ENCODE measurements at regions of chr7 and their contacts with region 1.

Region 1: GRCh38 chr7:140326116-140326928 is 72.0 kb downstream of the SLC37A3 start:
- DNase-seq: no peak
- H3K4me3 ChIP-seq: no peak overlapping the region
- H3K27me3 ChIP-seq: no peaks in the 10 kb centered on the region
- CTCF ChIP-seq: peak; percentile 82

Region 2: DNA sequence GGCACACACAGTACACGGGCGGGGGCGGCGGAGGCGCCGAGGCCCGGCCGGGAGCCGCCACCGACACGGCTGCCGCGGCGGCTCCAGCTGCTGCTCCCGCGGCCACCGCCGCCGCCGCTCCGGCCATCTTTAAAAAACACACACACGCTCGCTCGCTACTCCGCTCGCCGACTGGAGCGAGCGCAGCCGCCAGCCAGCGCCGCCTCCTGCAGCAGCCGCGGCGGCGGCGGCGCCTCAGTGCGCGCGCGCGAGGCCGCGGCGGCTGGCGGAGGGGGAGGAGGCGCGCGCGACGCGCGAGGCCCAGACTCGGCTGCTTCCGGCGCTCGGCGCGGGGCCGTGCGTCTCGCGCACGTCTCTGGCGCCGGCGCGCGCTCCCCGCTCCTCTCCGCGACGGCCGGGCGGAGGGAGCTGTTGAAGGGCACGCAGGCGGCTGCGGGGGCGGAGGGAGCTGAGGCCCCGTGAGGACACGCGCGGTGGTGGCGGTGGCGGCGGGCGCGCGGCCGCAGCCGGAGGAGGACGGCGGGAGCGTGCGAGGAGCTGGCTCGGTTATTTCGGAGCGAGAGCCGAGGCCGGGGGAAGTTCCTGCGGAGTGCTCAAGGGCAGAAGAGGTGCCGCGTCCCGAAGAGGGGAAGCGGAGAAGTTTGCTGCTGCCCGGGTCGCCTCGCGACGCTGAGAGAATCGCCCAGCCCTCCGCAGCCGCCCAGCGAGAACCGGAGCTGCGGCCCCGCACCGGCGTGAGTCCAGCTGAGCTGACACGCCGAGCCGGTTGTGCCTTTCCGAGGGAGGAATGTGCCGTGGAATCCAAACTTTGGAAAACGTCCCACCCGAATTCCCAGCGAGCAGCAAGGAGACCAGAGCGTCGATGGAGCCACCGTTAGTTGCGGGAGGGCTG is 149.3 kb before region 1 on chr7 and contains the start of gene KDM7A:
- CTCF ChIA-PET with region 1: interaction called, 10 read pairs
- POLR2A ChIA-PET with region 1: no interaction called
- DNase-seq: peak; percentile 57
- H3K4me3 ChIP-seq: peak within 1 kb of the TSS; percentile 82
- H3K27me3 ChIP-seq: peaks cover 2% of the 10 kb centered on the region; the same call in 1 of the 2 replicates
- CTCF ChIP-seq: no peak
- polyA plus RNA-seq, gene KDM7A: 2.9 and 4.3 TPM in 2 replicates

Region 3: GRCh38 chr7:140316165-140316661 is 10.1 kb before region 1 on chr7:
- CTCF ChIA-PET with region 1: interaction called, 12 read pairs
- POLR2A ChIA-PET with region 1: no interaction called
- DNase-seq: peak; percentile 18
- H3K4me3 ChIP-seq: no peak overlapping the region
- H3K27me3 ChIP-seq: no peaks in the 10 kb centered on the region
- CTCF ChIP-seq: no peak

Region 4: GRCh38 chr7:140390466-140391190 is 64.3 kb after region 1 on chr7:
- CTCF ChIA-PET with region 1: no interaction called
- POLR2A ChIA-PET with region 1: no interaction called
- DNase-seq: no peak
- H3K4me3 ChIP-seq: no peak overlapping the region
- H3K27me3 ChIP-seq: peaks cover 4% of the 10 kb centered on the region; the same call in 1 of the 2 replicates
- CTCF ChIP-seq: no peak

Region 5: DNA sequence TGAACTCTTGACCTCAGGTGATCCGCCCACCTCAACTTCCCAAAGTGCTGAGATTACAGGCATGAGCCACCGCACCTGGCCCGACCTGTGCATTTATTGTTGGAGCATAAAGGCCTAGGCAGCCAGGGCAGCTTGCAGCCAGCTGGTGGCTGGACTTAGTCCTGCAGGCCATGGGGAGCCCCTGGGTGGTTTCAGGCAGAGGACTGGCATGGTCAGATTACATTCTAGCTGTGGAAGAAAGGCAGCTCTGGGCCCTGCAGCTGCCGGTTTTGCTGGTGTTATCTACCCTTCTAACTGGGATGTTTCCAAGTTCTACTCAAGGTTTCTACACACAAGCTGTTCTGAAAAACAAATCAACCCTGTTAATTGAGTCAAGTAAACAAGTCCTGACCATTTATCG is 175.6 kb after region 1 on chr7:
- CTCF ChIA-PET with region 1: no interaction called
- POLR2A ChIA-PET with region 1: no interaction called
- DNase-seq: no peak
- H3K4me3 ChIP-seq: no peak overlapping the region
- H3K27me3 ChIP-seq: no peaks in the 10 kb centered on the region
- CTCF ChIP-seq: no peak

Region 6: DNA sequence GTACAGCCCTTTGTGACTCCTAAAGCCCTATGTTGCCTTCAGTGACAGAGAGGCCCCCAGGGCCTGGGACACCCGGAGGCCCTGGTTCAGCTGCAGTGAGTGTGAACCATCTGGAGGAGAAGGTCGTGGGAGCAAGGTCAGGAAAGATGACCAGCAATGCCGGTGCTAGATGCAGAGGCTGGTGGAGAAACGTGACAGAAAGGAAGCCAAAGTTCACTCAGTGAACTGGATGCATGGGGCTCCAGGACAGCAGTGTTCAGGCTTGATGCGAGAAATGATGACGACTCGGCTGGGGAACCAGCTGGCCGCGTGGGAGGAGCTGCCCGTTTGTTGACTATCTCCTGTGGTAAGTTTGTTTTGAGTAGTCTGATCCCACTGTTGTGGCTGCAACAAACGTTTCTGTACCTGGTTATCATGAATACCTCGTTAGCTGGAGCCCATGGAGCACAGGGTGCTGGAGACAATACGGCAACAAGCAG is 207.1 kb after region 1 on chr7:
- CTCF ChIA-PET with region 1: no interaction called
- POLR2A ChIA-PET with region 1: no interaction called
- DNase-seq: no peak
- H3K4me3 ChIP-seq: no peak overlapping the region
- H3K27me3 ChIP-seq: no peaks in the 10 kb centered on the region
- CTCF ChIP-seq: no peak

Region 7: DNA sequence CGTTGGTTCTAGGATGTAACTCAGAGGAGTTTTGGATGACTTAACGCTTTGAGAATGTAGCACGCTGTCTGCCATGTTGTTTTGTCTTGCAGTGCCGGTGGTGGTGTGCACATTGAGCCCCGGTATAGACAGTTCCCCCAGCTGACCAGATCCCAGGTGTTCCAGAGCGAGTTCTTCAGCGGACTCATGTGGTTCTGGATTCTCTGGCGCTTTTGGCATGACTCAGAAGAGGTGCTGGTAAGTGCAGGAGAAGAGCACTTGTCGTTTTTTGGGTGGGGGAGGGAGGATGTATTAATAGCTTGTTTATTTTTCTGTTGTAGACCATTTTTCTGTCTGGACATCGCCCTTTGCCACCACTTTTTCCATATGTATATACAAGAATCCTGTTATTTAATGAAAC is 376.5 kb after region 1 on chr7:
- CTCF ChIA-PET with region 1: no interaction called
- POLR2A ChIA-PET with region 1: no interaction called
- DNase-seq: no peak
- H3K4me3 ChIP-seq: no peak overlapping the region
- H3K27me3 ChIP-seq: no peaks in the 10 kb centered on the region
- CTCF ChIP-seq: no peak

Measured in BJ (cell line).